Transverse colon (tissue), 4 donors: ENCODE measurements at regions of chr20 and their contacts with region 1.

Region 1: DNA sequence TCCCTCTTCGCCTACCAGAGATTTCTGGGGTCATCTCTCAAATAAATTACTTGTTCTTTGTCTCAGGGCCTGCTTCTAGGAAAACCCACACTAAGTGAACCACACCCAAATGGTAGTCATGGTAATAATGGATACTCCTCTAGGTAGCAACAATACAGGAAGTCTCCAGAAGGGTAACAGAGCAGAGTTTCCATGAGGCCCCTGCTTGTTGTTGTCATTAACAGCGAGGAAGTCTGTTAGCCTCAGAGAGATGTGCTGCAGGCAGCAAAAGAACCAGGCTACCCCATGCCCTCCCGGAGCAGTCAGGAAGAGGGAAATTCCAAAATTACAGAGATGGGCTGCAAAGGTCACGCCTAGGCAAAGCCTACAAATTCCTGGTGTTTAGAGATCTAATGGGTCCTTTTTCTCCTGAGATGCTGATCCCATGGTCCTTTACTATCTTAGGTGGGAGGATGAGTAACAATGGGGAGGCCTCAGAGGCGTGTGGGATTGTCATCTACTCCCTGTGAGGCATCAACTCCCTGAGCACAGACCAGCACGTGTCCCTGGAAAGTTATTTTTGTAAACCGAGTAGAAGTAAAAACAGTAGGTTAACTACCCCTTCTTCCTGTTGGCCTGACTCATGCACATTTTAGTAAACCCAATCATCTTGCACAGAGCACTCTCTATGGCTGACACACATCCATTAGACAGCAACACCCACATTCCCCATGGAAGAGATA is 10.1 kb downstream of the ISM1 start:
- DNase-seq: no peak
- H3K4me3 ChIP-seq: no peak overlapping the region
- H3K27ac ChIP-seq: no peak overlapping the region
- H3K4me1 ChIP-seq: no peaks in the 10 kb centered on the region
- H3K27me3 ChIP-seq: peaks cover 5% of the 10 kb centered on the region
- CTCF ChIP-seq: no peak
- EP300 ChIP-seq: no peak
- POLR2A ChIP-seq: no peak

Region 2: DNA sequence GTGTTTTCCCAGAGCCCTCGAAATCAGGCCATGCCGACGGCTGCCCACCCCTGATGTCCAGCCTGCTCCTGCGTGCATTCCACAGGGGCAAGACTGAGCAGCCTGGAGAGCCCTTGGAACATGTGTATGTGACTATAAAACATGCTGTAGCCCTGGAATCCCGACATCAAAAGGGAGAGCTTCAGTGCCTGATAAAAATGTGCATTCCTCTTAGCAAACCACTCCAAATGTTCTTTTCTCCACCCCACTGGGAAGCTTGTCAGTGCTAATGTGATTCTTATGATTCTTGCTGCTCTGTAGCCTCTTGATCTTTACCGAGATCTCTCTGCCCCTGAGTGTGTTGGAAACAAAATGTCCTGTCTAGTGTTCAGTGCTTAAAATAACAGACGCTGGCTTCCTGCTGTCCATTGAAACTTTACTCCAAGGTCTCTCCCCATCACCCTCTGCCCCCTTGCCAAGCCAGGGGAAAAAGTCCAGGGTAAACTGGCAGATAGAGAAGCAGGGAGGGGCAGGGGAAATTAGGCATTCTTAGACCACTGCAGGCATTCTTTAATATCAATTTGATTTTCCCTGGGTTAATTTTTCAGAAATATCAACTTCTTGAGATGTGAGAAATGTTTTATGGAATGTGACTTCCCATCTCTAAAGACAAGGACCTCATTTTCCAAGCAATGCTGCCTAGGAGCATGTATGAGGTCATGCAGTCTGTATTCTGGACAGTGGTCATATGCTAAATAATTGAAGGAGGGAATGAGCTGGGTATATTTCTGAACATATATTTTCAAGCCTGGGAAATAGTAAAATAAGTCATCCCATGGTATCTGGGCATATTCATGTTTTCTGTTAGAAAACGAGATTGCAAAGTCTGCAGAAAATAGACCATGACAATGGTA is 83.9 kb before region 1 on chr20:
- in situ Hi-C with region 1: loop called in 1 of 4 experiments (anchors 25 kb)
- intact Hi-C with region 1: no loop called
- DNase-seq: no peak
- H3K4me3 ChIP-seq: no peak overlapping the region
- H3K27ac ChIP-seq: no peak overlapping the region
- H3K4me1 ChIP-seq: no peaks in the 10 kb centered on the region
- H3K27me3 ChIP-seq: no peaks in the 10 kb centered on the region
- CTCF ChIP-seq: no peak
- EP300 ChIP-seq: no peak
- POLR2A ChIP-seq: no peak